Activated CD4-positive, alpha-beta memory T cell treated with anti-CD3 and anti-CD28 coated beads for 36 hours (primary cell): ENCODE measurements at regions of chr7 and their contacts with region 1.

Region 1: DNA sequence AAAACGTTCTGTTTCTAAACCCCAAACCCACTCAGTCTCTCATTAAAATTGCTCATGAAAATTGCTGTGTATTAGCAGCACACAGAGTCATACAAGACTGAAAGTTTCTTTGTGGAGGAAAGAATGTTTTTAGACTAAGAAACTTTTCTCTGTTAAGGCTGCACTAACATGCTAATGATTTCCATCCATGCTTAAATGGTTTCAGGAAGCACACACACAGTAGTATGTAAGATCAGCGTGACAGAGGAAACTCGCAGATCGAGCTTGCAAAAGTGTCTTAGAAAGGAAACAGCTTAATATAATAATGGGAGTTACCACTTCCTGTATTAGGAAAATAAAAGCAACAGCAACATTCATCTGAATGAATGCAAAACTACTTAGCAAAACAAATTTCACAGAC is 112.7 kb downstream of the ICA1 start:
- DNase-seq: no peak
- H3K4me3 Mint-ChIP-seq: peak overlapping the region; percentile 39
- H3K27ac Mint-ChIP-seq: peak overlapping the region; percentile 30
- H3K4me1 Mint-ChIP-seq: peaks cover 42% of the 10 kb centered on the region
- H3K27me3 Mint-ChIP-seq: no peaks in the 10 kb centered on the region

Region 2: DNA sequence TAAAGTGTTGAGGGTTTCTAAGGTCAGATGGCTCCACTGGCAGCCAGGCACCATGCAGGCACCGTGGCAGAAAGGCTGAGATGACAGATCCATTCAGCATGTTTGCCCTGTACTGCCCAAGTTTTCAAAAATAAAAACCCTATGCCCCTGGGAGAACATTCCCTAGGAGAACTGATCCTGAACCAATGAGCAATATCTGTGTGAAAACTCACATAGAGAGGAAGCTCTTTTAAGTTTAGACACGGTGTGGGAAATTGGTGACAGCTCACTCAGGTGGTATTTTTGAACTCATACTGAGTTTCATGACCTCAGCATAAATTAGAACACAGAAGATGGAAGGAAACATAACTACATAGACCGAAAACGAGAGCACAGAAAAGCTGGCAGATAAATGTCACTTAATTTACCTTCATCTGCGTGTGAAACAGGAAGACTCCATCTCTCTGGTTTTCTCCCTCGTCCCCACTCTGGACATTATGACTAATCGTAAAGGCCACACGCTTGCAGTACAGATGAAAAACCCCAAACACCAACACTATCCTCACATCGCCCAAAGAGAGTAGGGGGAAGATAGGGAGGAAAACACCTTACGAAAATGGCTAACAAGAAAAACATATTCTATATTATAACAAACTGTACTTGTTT is 15.0 kb before region 1 on chr7:
- CTCF ChIA-PET with region 1: interaction called, 4 read pairs
- POLR2A ChIA-PET with region 1: no interaction called
- intact Hi-C with region 1: loop called (anchors 1 kb)
- DNase-seq: peak; percentile 66
- H3K4me3 Mint-ChIP-seq: peak overlapping the region; percentile 35
- H3K27ac Mint-ChIP-seq: peak overlapping the region; percentile 71
- H3K4me1 Mint-ChIP-seq: peaks cover 60% of the 10 kb centered on the region
- H3K27me3 Mint-ChIP-seq: no peaks in the 10 kb centered on the region